ENCODE measurements at regions of chr3 and their contacts with region 1.

Region 1: GRCh38 chr3:144162079-144162478 is 190.5 kb downstream of the DIPK2A start:
- DNase-seq: peak; percentile 93
- ATAC-seq: peak; percentile 96
- H3K4me3 ChIP-seq: no peak overlapping the region
- H3K27ac ChIP-seq: peak overlapping the region; percentile 82
- H3K4me1 ChIP-seq: peaks cover 17% of the 10 kb centered on the region
- H3K27me3 ChIP-seq: no peaks in the 10 kb centered on the region
- CTCF ChIP-seq: no peak

Region 2: DNA sequence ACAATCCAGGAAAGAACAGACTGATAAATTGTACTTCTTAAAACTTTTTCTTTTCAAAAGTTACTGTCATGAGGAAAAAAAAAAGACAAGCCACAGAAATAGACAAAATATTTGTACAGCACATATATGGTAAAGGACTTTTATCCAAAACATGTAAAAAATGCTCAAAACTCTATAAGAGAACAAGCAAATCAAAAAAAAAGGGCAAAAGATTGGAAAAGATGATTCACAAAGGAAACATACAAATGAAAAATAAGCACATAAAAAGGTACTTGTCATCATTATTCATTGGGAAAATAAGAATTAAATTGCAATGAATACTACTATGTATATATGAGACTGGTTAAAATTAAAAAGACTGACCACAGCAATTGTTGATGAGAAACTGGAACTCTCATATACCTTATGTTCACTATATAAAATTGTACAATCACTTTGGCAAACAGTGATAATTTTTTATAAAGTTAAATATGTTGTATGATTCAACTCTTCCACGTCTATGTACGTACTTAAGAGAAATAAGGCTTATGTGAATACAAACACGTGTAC is 150.8 kb before region 1 on chr3:
- CTCF ChIA-PET with region 1: no interaction called
- POLR2A ChIA-PET with region 1: no interaction called
- intact Hi-C with region 1: loop called (anchors 1 kb)
- DNase-seq: peak; percentile 75
- ATAC-seq: peak; percentile 93
- H3K4me3 ChIP-seq: no peak overlapping the region; the same call in 1 of the 2 replicates
- H3K27ac ChIP-seq: peak overlapping the region; percentile 87
- H3K4me1 ChIP-seq: peaks cover 27% of the 10 kb centered on the region
- H3K27me3 ChIP-seq: no peaks in the 10 kb centered on the region
- CTCF ChIP-seq: no peak

Region 3: DNA sequence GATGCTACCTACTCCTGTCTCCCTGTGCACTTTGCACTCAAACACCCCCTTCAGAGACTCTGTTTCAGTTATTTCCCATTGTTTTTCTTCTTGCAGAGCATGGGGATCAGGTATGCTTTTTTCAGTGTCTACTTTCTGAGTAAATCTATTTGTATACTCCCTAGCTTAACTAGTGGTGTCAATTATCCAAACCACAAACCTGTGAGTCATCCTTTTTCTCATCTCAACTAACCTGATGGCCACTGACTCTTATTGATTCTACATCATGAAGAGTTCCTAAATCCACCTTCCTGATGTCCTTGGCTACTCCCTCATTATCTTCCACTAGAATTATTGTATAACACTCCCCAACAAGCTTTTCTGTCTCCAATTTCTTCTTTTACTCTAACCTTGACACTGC is 122.4 kb before region 1 on chr3:
- CTCF ChIA-PET with region 1: no interaction called
- POLR2A ChIA-PET with region 1: no interaction called
- intact Hi-C with region 1: no loop called
- DNase-seq: peak; percentile 81
- ATAC-seq: peak; percentile 99
- H3K4me3 ChIP-seq: no peak overlapping the region
- H3K27ac ChIP-seq: 0 out of 2 replicates have a peak overlapping the region, but pooled peaks have one; percentile 19
- H3K4me1 ChIP-seq: peaks cover 14% of the 10 kb centered on the region
- H3K27me3 ChIP-seq: no peaks in the 10 kb centered on the region
- CTCF ChIP-seq: no peak

Region 4: GRCh38 chr3:144053096-144053495 is 109.0 kb before region 1 on chr3:
- CTCF ChIA-PET with region 1: no interaction called
- POLR2A ChIA-PET with region 1: no interaction called
- intact Hi-C with region 1: loop called (anchors 1 kb)
- DNase-seq: peak; percentile 91
- ATAC-seq: peak; percentile 80
- H3K4me3 ChIP-seq: no peak overlapping the region
- H3K27ac ChIP-seq: peak overlapping the region; percentile 48
- H3K4me1 ChIP-seq: peaks cover 32% of the 10 kb centered on the region
- H3K27me3 ChIP-seq: no peaks in the 10 kb centered on the region
- CTCF ChIP-seq: no peak

Region 5: DNA sequence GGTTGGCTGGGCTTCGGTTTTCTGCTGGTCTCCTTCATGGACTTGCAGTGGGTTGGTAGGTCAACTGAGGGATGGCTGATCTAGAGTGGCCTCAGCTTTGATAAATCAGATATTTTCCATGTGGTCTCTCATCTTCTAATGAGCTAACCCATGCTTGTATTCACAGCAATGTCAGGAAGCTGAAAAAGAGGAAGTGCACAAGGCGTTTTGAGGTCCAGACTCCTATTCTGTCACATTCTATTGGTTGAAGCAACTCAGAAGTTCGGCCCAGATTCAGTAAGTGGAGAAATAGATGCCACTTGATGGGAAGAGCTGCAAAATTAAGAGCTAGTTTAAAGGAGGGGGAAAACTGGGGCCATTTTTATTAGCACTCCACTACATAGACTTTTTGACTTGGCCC is 170.8 kb after region 1 on chr3:
- CTCF ChIA-PET with region 1: no interaction called
- POLR2A ChIA-PET with region 1: no interaction called
- intact Hi-C with region 1: no loop called
- DNase-seq: no peak
- ATAC-seq: no peak
- H3K4me3 ChIP-seq: no peak overlapping the region
- H3K27ac ChIP-seq: no peak overlapping the region
- H3K4me1 ChIP-seq: no peaks in the 10 kb centered on the region
- H3K27me3 ChIP-seq: no peaks in the 10 kb centered on the region
- CTCF ChIP-seq: no peak

Region 6: GRCh38 chr3:144429719-144430121 is 267.6 kb after region 1 on chr3:
- CTCF ChIA-PET with region 1: no interaction called
- POLR2A ChIA-PET with region 1: no interaction called
- intact Hi-C with region 1: loop called (anchors 1 kb)
- DNase-seq: peak; percentile 79
- ATAC-seq: peak; percentile 75
- H3K4me3 ChIP-seq: no peak overlapping the region
- H3K27ac ChIP-seq: peak overlapping the region; percentile 89
- H3K4me1 ChIP-seq: peaks cover 24% of the 10 kb centered on the region; the same call in 1 of the 2 replicates
- H3K27me3 ChIP-seq: no peaks in the 10 kb centered on the region
- CTCF ChIP-seq: no peak

Region 7: DNA sequence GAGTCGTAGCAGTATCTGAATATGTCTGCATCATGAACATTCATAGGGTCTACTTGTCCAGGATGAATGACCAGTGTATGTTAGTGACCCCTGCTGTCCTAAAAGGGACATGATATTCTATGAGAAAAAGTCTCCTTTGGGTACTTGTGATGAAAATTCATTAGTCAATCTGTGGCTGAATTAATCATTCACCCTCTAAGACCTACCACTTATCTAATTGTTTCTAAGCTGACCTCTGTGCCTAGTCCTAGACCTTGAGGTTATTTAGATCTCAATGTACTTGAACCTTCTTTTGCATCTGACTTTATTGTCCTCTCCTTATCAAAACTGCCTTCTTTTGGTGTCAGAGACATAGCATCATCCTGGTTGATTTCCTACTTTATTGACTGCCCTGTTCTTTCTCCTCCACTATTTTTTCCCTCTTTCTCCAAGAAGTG is 608.9 kb after region 1 on chr3:
- CTCF ChIA-PET with region 1: interaction called, 3 read pairs
- POLR2A ChIA-PET with region 1: no interaction called
- intact Hi-C with region 1: loop called (anchors 5 kb)
- DNase-seq: peak; percentile 45
- ATAC-seq: peak; percentile 71
- H3K4me3 ChIP-seq: no peak overlapping the region
- H3K27ac ChIP-seq: no peak overlapping the region
- H3K4me1 ChIP-seq: no peaks in the 10 kb centered on the region
- H3K27me3 ChIP-seq: no peaks in the 10 kb centered on the region
- CTCF ChIP-seq: peak; percentile 54